ENCODE measurements at regions of chr17 and their contacts with region 1.

Region 1: DNA sequence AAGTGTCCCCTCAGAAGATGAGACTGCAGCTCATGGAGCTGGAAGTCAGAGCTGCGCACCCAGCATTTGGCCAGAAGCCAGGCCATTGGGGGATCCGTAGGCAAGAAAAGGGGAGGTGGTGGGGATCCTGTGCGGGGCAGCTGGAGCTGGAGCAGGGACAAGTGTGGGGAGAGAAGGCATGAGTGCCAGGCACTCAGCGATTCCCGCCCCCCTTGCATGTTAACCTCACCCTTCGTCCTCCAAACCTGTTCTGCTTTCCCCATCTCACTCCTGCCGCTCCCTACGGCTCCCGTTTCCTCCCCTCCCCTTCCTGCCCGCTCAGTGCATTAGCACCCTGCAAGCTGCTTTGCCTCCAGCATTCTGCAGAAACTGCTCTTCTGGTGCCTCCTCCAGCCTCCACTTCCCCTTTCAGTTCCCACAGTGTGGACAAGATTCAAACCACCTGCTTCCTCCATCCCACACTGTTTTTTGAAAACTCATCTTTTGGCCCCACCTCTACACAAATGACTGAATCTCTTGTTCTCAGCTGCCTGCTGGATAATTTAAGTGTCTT is 5.6 kb downstream of the ALOX15 start:
- DNase-seq: peak; percentile 20
- H3K4me3 ChIP-seq: no peak overlapping the region
- H3K27ac ChIP-seq: no peak overlapping the region
- H3K4me1 ChIP-seq: peaks cover 0 to 9% (median 7%) of the 10 kb centered on the region in 4 donors
- H3K27me3 ChIP-seq: peaks cover 63% of the 10 kb centered on the region
- CTCF ChIP-seq: no peak
- EP300 ChIP-seq: no peak
- POLR2A ChIP-seq: no peak

Region 2: DNA sequence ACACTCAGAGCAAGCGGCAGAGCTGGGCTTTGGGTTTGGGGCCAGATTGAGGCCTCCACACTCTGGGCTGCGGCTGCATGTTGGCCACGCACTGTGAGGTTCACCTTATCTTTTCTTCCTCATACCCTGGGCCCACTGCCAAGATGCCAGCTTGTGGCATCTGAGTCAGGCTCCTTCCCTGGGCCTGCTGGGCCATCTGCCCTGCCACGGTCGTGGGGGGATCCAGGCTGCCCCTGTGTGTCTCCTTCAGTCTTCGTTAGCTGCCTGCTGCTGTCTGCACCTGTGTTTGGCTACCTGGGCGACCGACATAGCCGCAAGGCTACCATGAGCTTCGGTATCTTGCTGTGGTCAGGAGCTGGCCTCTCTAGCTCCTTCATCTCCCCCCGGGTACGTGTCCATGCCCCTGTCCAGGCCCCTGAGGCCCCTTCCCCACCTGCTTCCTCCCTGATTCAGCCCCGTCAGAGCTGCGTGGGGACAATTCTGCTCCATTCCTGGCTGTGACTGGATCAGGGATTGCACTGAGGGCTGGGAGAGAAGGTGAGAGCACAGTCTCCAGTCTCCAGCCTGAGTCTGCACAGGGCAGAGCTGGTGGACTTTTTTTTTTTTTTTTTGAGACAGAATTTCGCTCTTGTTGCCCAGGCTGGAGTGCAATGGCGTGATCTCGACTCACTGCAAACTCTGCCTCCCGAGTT is 191.0 kb before region 1 on chr17:
- in situ Hi-C with region 1: loop called in 1 of 4 experiments (anchors 25 kb)
- intact Hi-C with region 1: no loop called
- DNase-seq: peak; percentile 83
- H3K4me3 ChIP-seq: no peak overlapping the region
- H3K27ac ChIP-seq: no peak overlapping the region
- H3K4me1 ChIP-seq: peaks cover 0 to 11% (median 7%) of the 10 kb centered on the region in 4 donors
- H3K27me3 ChIP-seq: no peaks in the 10 kb centered on the region
- CTCF ChIP-seq: no peak
- EP300 ChIP-seq: no peak
- POLR2A ChIP-seq: no peak

Region 3: DNA sequence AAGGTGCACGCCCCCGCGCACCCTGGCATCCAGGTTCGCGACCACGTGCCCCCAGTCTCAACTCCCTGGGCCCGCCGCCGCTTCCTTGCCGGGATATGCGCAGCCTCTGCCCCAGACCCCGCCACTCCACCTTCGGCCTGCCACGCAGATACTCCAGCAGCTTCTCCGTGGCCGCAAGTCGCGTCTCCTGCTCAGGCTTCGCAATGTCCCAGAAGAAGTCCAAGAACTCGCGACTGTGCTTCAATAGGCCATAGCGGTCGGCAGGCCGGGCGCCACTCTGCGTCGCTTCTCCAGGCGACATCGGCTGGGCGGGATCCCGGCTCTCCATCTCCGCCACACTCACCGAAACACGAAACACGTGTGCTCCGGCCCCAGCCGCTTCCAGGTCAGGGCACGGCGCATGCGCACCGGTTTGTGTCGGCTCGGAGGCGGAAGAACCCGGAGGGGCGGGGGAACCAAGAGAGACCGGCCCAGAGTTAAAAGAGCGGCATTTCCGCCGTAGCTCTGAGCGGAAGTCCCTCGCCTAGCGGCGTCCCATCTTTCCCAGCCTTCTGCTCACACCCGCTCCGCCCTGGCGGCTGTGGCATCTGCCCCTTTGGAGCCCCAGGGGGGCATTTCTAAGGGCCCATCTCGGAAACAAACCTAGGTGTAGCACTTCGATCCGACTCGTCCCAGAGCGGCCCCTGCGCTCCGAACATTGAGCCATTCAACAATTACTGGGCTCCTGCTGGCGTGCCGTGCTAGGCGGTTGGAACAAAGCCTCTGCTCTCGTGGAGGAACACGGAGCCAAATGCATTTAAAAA is 80.7 kb before region 1 on chr17 and contains the start of gene MYBBP1A:
- in situ Hi-C with region 1: no loop called
- intact Hi-C with region 1: no loop called
- DNase-seq: peak; percentile 98
- H3K4me3 ChIP-seq: peak within 1 kb of the TSS; percentile 49 to 75 (median 64)
- H3K27ac ChIP-seq: peak within 1 kb of the TSS; percentile 82 to 90 (median 87)
- H3K4me1 ChIP-seq: peaks cover 4 to 30% (median 26%) of the 10 kb centered on the region in 4 donors
- H3K27me3 ChIP-seq: no peaks in the 10 kb centered on the region
- CTCF ChIP-seq: peak in 2 of 5 experiments; percentile 33
- EP300 ChIP-seq: no peak
- POLR2A ChIP-seq: peak; percentile 68
- total RNA-seq, gene MYBBP1A: 25.4 to 148 (median 81.5) TPM

Region 4: GRCh38 chr17:4583782-4584100 is 52.2 kb before region 1 on chr17:
- in situ Hi-C with region 1: no loop called
- intact Hi-C with region 1: no loop called
- DNase-seq: no peak
- H3K4me3 ChIP-seq: peak overlapping the region in 3 of 4 donors; percentile 23 to 45 (median 40)
- H3K27ac ChIP-seq: no peak overlapping the region
- H3K4me1 ChIP-seq: peaks cover 0 to 16% (median 12%) of the 10 kb centered on the region in 4 donors
- H3K27me3 ChIP-seq: peaks cover 46% of the 10 kb centered on the region
- CTCF ChIP-seq: peak in 2 of 5 experiments; percentile 12 to 15
- EP300 ChIP-seq: no peak
- POLR2A ChIP-seq: no peak

Region 5: GRCh38 chr17:4617590-4618351 is 18.1 kb before region 1 on chr17:
- in situ Hi-C with region 1: no loop called
- intact Hi-C with region 1: loop called (anchors 1 kb)
- DNase-seq: no peak
- H3K4me3 ChIP-seq: no peak overlapping the region
- H3K27ac ChIP-seq: no peak overlapping the region
- H3K4me1 ChIP-seq: no peaks in the 10 kb centered on the region
- H3K27me3 ChIP-seq: no peaks in the 10 kb centered on the region
- CTCF ChIP-seq: no peak
- EP300 ChIP-seq: no peak
- POLR2A ChIP-seq: no peak

Region 6: DNA sequence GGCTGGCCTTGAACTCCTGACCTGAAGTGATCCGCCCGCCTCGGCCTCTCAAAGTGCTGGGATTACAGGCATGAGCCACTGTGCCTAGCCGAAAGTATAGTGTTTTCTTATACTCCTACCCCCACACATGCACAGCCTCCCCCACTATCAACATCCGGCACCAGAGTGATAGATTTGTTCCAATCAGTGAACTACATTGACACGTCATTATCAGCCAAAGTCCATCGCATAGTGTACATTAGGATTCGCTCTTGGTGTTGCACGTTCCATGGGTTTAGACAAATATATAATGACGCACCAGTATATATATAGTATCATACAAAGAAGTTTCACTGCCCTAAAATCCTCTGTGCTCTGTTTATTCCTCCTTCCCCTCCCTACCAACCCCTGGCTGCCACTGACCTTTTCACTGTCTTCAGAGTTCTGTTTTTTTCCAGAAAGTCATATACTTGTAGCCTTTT is 123.9 kb after region 1 on chr17:
- in situ Hi-C with region 1: no loop called
- intact Hi-C with region 1: no loop called
- DNase-seq: no peak
- H3K4me3 ChIP-seq: no peak overlapping the region
- H3K27ac ChIP-seq: no peak overlapping the region
- H3K4me1 ChIP-seq: no peaks in the 10 kb centered on the region
- H3K27me3 ChIP-seq: peaks cover 5% of the 10 kb centered on the region
- CTCF ChIP-seq: no peak
- EP300 ChIP-seq: no peak
- POLR2A ChIP-seq: no peak

Region 7: DNA sequence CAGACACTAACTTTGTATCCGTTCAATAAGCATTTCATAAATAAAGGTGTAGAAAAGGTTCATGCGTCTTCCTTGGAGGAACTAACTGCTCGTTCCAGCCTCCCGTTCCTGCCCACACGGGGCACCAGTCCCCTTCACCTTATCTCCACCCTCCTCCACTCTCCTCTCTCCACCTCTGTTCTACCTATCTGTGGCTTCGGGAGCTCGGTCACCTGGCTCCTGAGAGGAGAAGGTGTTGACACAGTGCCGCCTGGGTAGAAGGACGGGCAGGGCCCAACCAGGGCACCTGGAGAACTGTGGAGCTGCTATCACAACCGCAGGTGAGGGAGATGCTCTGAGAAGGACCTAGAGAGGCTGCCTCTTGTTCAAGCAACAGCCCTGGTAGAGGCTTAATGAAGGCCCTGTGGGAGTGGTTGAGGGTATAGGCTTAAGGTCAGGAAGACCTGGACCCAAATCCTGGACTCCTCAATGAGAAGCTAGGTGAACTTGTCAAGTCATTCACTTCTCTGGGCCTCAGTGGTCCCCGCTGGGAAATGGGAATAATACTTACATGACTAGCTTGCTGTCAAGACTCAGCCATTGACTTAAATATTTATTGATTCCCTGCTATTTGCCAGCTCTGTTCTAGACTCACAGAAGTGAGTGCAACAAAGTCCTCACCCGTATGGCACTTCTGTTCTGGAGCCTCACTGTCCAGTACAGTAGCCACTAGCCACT is 187.6 kb after region 1 on chr17:
- in situ Hi-C with region 1: no loop called
- intact Hi-C with region 1: no loop called
- DNase-seq: no peak
- H3K4me3 ChIP-seq: no peak overlapping the region
- H3K27ac ChIP-seq: no peak overlapping the region
- H3K4me1 ChIP-seq: no peaks in the 10 kb centered on the region
- H3K27me3 ChIP-seq: no peaks in the 10 kb centered on the region
- CTCF ChIP-seq: no peak
- EP300 ChIP-seq: no peak
- POLR2A ChIP-seq: no peak

Measured in transverse colon (tissue), 4 donors.